Mammary epithelial cell (primary cell): ENCODE measurements at regions of chr20 and their contacts with region 1.

Region 1: GRCh38 chr20:49948809-49949548 is 12.8 kb downstream of the RNF114 start:
- DNase-seq: no peak
- H3K4me3 ChIP-seq: no peak overlapping the region
- H3K27ac ChIP-seq: no peak overlapping the region
- H3K4me1 ChIP-seq: peaks cover 12% of the 10 kb centered on the region
- H3K27me3 ChIP-seq: no peaks in the 10 kb centered on the region
- CTCF ChIP-seq: no peak

Region 2: GRCh38 chr20:49915378-49916145 is 33.4 kb before region 1 on chr20 and contains the start of gene SPATA2:
- CTCF ChIA-PET with region 1: interaction called, 4 read pairs
- dilution Hi-C with region 1: loop called (anchors 5 kb)
- in situ Hi-C with region 1: no loop called
- intact Hi-C with region 1: no loop called
- DNase-seq: peak; percentile 91
- H3K4me3 ChIP-seq: peak within 1 kb of the TSS; percentile 65 to 81 (median 66)
- H3K27ac ChIP-seq: peak within 1 kb of the TSS; percentile 97
- H3K4me1 ChIP-seq: peaks cover 21% of the 10 kb centered on the region
- H3K27me3 ChIP-seq: no peaks in the 10 kb centered on the region
- CTCF ChIP-seq: no peak
- total RNA-seq, gene SPATA2: 4.2 to 6.9 TPM

Region 3: GRCh38 chr20:50015991-50016770 is 67.2 kb after region 1 on chr20:
- CTCF ChIA-PET with region 1: no interaction called
- dilution Hi-C with region 1: loop called (anchors 5 kb)
- in situ Hi-C with region 1: no loop called
- intact Hi-C with region 1: no loop called
- DNase-seq: no peak
- H3K4me3 ChIP-seq: no peak overlapping the region
- H3K27ac ChIP-seq: no peak overlapping the region
- H3K4me1 ChIP-seq: peaks cover 20% of the 10 kb centered on the region
- H3K27me3 ChIP-seq: no peaks in the 10 kb centered on the region
- CTCF ChIP-seq: no peak

Region 4: DNA sequence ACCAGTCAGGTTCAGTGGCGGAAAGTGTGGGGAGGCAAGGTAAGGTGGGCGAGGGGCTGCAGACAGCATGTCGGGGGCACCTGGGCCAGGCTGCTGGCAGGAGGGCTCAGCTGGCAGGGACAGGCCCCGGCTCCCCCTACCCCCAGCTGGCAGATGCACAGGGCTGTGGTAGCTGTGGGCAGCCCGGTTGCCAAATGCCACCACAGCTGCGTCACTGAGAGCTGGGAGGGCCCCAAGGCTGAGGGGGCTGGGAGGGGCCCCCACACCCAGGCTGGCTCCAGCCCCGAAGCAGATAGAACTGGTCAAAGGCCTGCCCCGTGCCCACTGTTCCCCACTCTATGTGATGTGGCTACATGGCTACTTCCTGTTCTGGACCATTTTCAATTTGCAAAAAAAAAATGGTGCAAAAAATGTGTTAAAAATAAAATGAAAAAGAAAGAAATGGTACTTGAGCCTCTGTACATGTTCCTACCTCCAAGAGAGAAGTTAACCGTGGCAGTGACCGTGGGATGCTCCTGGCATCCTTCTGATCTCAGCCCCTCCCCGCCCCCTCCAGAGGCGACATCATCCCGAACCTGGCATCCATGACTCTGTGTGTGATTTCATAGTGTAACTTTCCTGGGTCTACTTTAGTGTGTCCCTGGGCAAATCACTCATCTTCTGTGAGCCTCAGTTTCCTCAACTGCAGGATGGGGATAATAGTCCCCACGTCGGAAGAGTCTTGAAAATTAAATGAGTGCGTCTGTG is 99.6 kb after region 1 on chr20:
- CTCF ChIA-PET with region 1: no interaction called
- dilution Hi-C with region 1: loop called (anchors 5 kb)
- in situ Hi-C with region 1: no loop called
- intact Hi-C with region 1: no loop called
- DNase-seq: peak; percentile 13
- H3K4me3 ChIP-seq: no peak overlapping the region
- H3K27ac ChIP-seq: no peak overlapping the region
- H3K4me1 ChIP-seq: peaks cover 4% of the 10 kb centered on the region
- H3K27me3 ChIP-seq: no peaks in the 10 kb centered on the region
- CTCF ChIP-seq: no peak

Region 5: GRCh38 chr20:50395258-50395729 is 446.3 kb after region 1 on chr20:
- CTCF ChIA-PET with region 1: no interaction called
- dilution Hi-C with region 1: no loop called
- in situ Hi-C with region 1: no loop called
- intact Hi-C with region 1: no loop called
- DNase-seq: no peak
- H3K4me3 ChIP-seq: no peak overlapping the region
- H3K27ac ChIP-seq: no peak overlapping the region
- H3K4me1 ChIP-seq: peaks cover 16% of the 10 kb centered on the region
- H3K27me3 ChIP-seq: no peaks in the 10 kb centered on the region
- CTCF ChIP-seq: no peak